Heart right ventricle (tissue), 16 donors: ENCODE measurements at regions of chr10 and their contacts with region 1.

Region 1: DNA sequence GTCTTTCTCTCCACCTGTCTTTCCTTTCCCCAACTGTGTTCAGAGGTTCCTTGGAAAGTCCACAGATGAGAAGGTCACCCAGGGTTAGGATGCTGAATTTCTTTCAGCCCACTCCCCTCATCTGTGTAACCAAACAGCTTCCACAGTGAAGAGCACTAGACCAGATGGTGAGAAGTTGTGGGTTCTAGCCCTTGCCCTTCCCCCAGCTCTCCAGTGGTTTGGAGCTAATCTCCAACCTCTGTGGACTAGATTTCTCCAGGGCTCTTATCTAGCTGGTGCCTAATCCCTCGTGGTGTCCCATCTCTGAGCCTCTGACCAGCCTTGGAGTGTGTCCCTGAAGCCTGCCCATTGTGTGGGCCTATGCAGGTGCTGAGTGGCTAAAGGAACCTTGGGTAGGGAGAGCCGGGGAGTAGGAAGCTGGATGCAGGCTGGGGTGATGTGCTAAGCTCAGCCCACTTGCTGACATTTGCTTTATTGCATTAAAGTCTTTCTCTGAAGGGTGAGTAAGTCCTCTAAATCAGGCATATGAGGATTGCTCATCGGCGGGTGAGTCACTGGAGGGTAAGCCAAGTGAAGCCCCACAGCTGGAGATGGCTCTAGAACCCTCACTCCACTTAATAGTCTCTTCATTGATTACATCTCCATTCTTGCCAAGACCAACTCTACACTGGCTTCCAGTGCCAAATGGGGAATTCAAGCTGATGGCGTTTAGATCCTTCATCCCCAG is 14.9 kb downstream of the DUSP5 start:
- DNase-seq: no peak
- ATAC-seq: peak in 3 of 8 donors; percentile 10 to 54 (median 11)
- H3K4me3 ChIP-seq: no peak overlapping the region
- H3K27ac ChIP-seq: peak overlapping the region in 5 of 10 donors; percentile 2 to 37 (median 26)
- H3K4me1 ChIP-seq: peaks cover 6 to 46% (median 31%) of the 10 kb centered on the region in 9 donors
- H3K27me3 ChIP-seq: no peaks in the 10 kb centered on the region
- CTCF ChIP-seq: no peak

Region 2: GRCh38 chr10:110446954-110447608 is 65.5 kb before region 1 on chr10:
- intact Hi-C with region 1: loop called in 1 of 10 experiments (anchors 5 kb)
- DNase-seq: peak in 1 of 2 donors; percentile 34
- ATAC-seq: peak in 3 of 8 donors; percentile 32 to 53 (median 41)
- H3K4me3 ChIP-seq: no peak overlapping the region
- H3K27ac ChIP-seq: peak overlapping the region in 1 of 10 donors; percentile 63
- H3K4me1 ChIP-seq: peaks cover 5 to 32% (median 10%) of the 10 kb centered on the region in 9 donors
- H3K27me3 ChIP-seq: no peaks in the 10 kb centered on the region
- CTCF ChIP-seq: peak in 3 of 9 donors; percentile 15 to 23 (median 21)

Region 3: GRCh38 chr10:110977662-110978061 is 465.0 kb after region 1 on chr10:
- intact Hi-C with region 1: no loop called
- DNase-seq: no peak
- ATAC-seq: peak in 2 of 8 donors; percentile 37 to 50
- H3K4me3 ChIP-seq: no peak overlapping the region
- H3K27ac ChIP-seq: no peak overlapping the region
- H3K4me1 ChIP-seq: peaks cover 0 to 27% (median 13%) of the 10 kb centered on the region in 9 donors
- H3K27me3 ChIP-seq: no peaks in the 10 kb centered on the region
- CTCF ChIP-seq: no peak